ENCODE measurements at regions of chr16 and their contacts with region 1.

Region 1: GRCh38 chr16:75148311-75149195 is at the start of gene ZFP1:
- DNase-seq: peak; percentile 92 to 95
- ATAC-seq: peak; percentile 97 to 98
- H3K4me3 ChIP-seq: peak within 1 kb of the TSS; percentile 80 to 100 (median 95)
- H3K27ac ChIP-seq: peak within 1 kb of the TSS; percentile 97 to 100 (median 98)
- H3K4me1 ChIP-seq: peaks cover 3 to 8% of the 10 kb centered on the region in 2 donors
- H3K27me3 ChIP-seq: no peaks in the 10 kb centered on the region
- CTCF ChIP-seq: no peak
- POLR2A ChIP-seq: peak; percentile 63 to 74
- total RNA-seq, gene ZFP1: 4.1 to 11.0 (median 6.5) TPM

Region 2: GRCh38 chr16:75116081-75116910 is 32.3 kb before region 1 on chr16 and contains the start of gene LDHD:
- in situ Hi-C with region 1: no loop called
- intact Hi-C with region 1: loop called (anchors 1 kb)
- DNase-seq: peak; percentile 89 to 95
- ATAC-seq: peak; percentile 94 to 96
- H3K4me3 ChIP-seq: peak within 1 kb of the TSS; percentile 69 to 77 (median 75)
- H3K27ac ChIP-seq: peak within 1 kb of the TSS; percentile 95 to 99 (median 96)
- H3K4me1 ChIP-seq: peaks cover 29 to 38% of the 10 kb centered on the region in 2 donors
- H3K27me3 ChIP-seq: no peaks in the 10 kb centered on the region
- CTCF ChIP-seq: no peak
- POLR2A ChIP-seq: peak; percentile 87 to 92
- total RNA-seq, gene LDHD: 27.8 to 54.5 (median 44.2) TPM

Region 3: GRCh38 chr16:75432828-75433731 is 284.5 kb after region 1 on chr16 and contains the start of gene CFDP1:
- in situ Hi-C with region 1: no loop called
- intact Hi-C with region 1: loop called (anchors 1 kb)
- DNase-seq: peak; percentile 93 to 94
- ATAC-seq: peak; percentile 93 to 96
- H3K4me3 ChIP-seq: peak within 1 kb of the TSS; percentile 88 to 100 (median 95)
- H3K27ac ChIP-seq: peak within 1 kb of the TSS; percentile 80 to 99 (median 96)
- H3K4me1 ChIP-seq: peaks cover 15 to 17% of the 10 kb centered on the region in 2 donors
- H3K27me3 ChIP-seq: no peaks in the 10 kb centered on the region
- CTCF ChIP-seq: peak in 2 of 5 experiments; percentile 25 to 28
- POLR2A ChIP-seq: peak; percentile 71 to 78
- total RNA-seq, gene CFDP1: 20.4 to 28.6 (median 24.2) TPM

Region 4: DNA sequence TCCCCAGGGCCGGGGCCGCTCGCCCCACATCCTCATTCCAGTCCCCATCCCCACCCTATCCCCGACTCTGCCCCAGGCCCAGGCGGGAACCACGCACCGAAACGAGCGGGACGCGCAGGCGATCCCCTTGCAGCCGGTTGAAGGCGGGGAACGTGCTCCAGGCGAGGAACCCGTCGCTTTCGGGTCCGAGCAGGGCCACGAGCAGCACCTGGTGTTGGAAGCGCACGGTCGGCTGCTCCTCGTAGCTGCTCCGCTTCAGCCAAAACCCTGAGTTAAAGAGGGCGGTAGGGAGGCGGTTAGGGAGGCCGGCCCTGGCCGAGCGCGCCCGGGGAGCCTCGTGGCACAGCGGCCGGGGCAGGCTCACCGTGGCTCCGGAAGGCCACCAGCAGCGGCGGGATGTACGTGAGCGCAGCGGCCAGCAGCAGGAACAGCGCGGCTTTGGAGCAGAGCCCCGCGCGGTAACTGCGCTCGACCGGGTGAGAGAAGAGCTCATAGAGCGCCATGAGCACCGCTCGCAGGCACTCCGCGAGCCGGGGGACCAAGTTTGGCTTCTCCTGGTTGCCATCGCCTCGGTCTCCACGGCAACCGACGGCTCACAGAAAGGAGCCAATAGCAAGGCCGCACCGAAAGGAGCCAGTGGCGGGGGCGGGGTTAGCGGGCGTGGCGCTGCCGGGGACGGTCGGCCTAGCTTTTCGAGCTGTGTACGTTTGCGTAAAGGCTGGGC is 407.3 kb after region 1 on chr16 and contains the start of gene TMEM231:
- in situ Hi-C with region 1: no loop called
- intact Hi-C with region 1: loop called (anchors 10 kb)
- DNase-seq: peak; percentile 95
- ATAC-seq: peak; percentile 93
- H3K4me3 ChIP-seq: peak within 1 kb of the TSS; percentile 76 to 84 (median 82)
- H3K27ac ChIP-seq: peak within 1 kb of the TSS; percentile 76 to 87 (median 82)
- H3K4me1 ChIP-seq: peaks cover 8 to 14% of the 10 kb centered on the region in 2 donors
- H3K27me3 ChIP-seq: no peaks in the 10 kb centered on the region
- CTCF ChIP-seq: no peak
- POLR2A ChIP-seq: peak; percentile 39 to 52
- total RNA-seq, gene TMEM231: 0.76 to 2.3 (median 1.7) TPM

Measured in gastrocnemius medialis (tissue), 4 donors.